ENCODE measurements at regions of chr17 and their contacts with region 1.

Region 1: GRCh38 chr17:66348584-66349165 is 46.3 kb downstream of the PRKCA start:
- DNase-seq: peak; percentile 92
- ATAC-seq: peak; percentile 82
- H3K4me3 ChIP-seq: peak overlapping the region; percentile 51
- H3K27ac ChIP-seq: peak overlapping the region; percentile 90
- H3K4me1 ChIP-seq: peaks cover 62% of the 10 kb centered on the region
- H3K27me3 ChIP-seq: no peaks in the 10 kb centered on the region
- CTCF ChIP-seq: no peak

Region 2: DNA sequence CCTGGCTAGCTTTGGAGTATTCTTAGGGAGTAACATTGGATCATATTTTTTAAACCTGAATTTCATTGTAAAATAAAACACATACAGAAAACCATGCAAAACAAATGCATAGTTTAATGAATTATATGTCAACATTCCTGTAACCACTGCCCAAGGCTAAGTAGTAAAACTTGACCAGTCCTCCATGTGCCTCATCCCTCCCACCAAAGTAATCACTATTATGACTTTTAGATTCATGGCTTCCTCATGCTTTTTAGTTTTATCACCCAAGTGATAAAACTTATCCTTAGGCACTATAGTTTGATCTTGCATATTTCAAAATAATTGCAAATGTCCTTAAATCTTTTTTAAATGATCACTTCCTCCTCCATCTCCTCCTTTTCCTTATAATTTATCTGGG is 25.9 kb before region 1 on chr17:
- CTCF ChIA-PET with region 1: no interaction called
- POLR2A ChIA-PET with region 1: interaction called, 8 read pairs
- intact Hi-C with region 1: loop called (anchors 1 kb)
- DNase-seq: peak; percentile 48
- ATAC-seq: peak; percentile 86
- H3K4me3 ChIP-seq: no peak overlapping the region
- H3K27ac ChIP-seq: no peak overlapping the region
- H3K4me1 ChIP-seq: peaks cover 6% of the 10 kb centered on the region
- H3K27me3 ChIP-seq: no peaks in the 10 kb centered on the region
- CTCF ChIP-seq: no peak

Region 3: DNA sequence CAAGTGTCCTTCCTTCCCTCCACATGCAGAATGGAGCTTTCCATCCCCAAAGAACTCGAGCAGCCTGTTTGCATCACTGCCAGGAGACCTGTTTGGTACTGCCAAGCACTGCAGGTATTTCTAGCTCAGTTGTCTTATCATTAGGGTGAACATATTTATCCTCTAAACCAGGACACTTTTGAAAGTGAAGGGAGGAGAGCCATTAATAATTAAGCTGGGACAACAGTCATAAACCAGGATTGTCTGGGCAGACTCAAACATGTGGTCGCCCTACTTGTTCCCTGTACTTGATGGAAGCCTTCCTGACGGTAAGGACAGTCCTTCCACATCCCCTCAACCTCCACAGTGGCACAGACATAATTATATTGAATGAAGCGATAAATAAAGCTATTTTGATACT is 21.2 kb after region 1 on chr17:
- CTCF ChIA-PET with region 1: no interaction called
- POLR2A ChIA-PET with region 1: no interaction called
- intact Hi-C with region 1: no loop called
- DNase-seq: no peak
- ATAC-seq: no peak
- H3K4me3 ChIP-seq: no peak overlapping the region
- H3K27ac ChIP-seq: no peak overlapping the region
- H3K4me1 ChIP-seq: peaks cover 20% of the 10 kb centered on the region
- H3K27me3 ChIP-seq: no peaks in the 10 kb centered on the region
- CTCF ChIP-seq: no peak

Region 4: GRCh38 chr17:66431910-66432683 is 83.4 kb after region 1 on chr17:
- CTCF ChIA-PET with region 1: no interaction called
- POLR2A ChIA-PET with region 1: no interaction called
- intact Hi-C with region 1: loop called (anchors 5 kb)
- DNase-seq: peak; percentile 93
- ATAC-seq: peak; percentile 94
- H3K4me3 ChIP-seq: peak overlapping the region; percentile 20; the same call in 1 of the 2 replicates
- H3K27ac ChIP-seq: peak overlapping the region; percentile 31
- H3K4me1 ChIP-seq: peaks cover 27% of the 10 kb centered on the region
- H3K27me3 ChIP-seq: no peaks in the 10 kb centered on the region
- CTCF ChIP-seq: no peak

Region 5: GRCh38 chr17:66459811-66460270 is 111.2 kb after region 1 on chr17:
- CTCF ChIA-PET with region 1: no interaction called
- POLR2A ChIA-PET with region 1: no interaction called
- intact Hi-C with region 1: loop called (anchors 2 kb)
- DNase-seq: peak; percentile 97
- ATAC-seq: peak; percentile 91
- H3K4me3 ChIP-seq: peak overlapping the region; percentile 8; the same call in 1 of the 2 replicates
- H3K27ac ChIP-seq: peak overlapping the region; percentile 71
- H3K4me1 ChIP-seq: peaks cover 55% of the 10 kb centered on the region
- H3K27me3 ChIP-seq: no peaks in the 10 kb centered on the region
- CTCF ChIP-seq: no peak